ENCODE measurements at regions of chr16 and their contacts with region 1.

Region 1: DNA sequence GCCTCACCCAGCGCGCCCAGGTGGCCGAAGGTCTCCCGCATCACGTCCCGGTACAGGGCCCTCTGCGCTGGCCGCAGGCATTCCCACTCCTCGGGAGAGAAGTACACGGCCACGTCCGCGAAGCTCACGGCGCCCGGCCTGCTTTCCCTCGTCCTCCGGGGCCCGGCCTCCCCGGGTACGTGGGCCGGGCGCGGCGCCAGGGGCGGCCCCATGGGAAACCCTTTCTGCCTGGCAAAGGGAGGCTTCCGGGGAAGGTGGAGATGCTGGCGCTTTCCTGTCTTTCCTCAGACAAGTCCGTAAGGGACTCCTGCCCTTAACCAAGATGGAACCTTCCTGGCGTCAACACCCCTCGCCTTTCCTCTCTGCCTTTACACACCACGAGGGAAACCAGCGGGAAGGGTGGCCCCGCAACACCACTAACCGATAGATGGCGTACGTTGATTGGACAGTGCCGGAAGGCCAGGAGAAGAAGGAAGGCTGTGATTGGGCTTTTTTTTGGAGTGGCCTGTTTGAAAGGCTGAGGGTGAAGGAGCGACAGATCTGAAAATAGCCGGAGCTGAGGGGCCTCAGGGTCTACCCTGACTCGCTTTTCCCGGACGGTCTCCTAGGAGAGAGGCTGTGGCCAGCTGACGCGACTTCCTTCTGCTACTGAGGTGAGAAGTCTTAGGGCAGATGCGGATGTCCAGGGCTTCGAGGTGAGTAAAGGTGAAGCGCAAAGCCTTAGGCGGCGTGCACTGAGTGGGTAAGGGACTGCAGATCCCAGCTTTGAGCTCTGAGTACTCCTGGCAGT is at the start of gene ZNF785:
- DNase-seq: peak; percentile 92 to 99 (median 96)

Region 2: GRCh38 chr16:30535777-30536190 is 49.8 kb before region 1 on chr16:
- intact Hi-C with region 1: no loop called
- DNase-seq: peak in 7 of 10 donors; percentile 19 to 94 (median 49)

Region 3: DNA sequence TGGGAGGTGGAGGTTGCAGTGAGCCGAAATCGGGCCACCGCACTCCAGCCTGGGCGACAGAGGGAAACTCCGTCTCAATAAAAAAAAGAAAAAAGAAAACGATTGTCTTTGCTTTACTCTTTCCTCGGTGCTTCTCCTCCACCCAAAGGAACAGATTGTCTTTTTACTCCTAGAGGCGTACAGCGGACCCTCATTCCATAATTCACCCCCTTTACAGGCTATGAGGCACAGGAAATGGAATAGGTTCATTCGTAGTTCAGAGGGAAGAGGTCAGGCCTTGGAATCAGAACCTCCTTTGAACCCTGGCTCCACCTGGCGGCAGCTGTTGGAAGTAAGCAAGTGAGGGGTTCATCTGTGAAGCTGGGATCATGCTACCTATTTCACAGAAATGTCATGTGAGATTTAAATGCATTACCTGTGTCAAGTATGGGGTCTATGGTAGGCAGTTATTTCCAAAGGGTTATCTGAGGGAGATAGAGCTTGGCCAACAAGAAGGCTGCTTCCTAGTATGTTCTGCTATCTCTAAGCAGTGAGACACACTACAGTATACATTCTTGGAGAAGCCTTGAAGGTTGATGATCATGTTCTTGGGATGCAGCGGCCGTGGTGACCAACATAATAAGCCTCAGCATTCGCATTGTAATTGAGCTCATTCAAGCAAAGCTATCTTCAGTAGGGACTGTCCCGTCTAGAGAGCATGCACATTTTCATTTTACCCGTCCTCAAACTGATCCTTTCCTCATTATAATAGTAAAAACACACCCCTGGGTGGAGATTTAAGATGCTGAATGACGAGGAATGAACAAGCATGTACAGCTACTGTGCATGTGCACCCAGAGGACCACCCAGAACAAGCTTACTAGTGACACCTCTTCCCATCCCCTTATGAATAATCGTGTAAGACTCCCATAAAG is 43.3 kb after region 1 on chr16:
- intact Hi-C with region 1: loop called (anchors 5 kb)
- DNase-seq: peak; percentile 67 to 97 (median 91)

Measured in posterior cingulate gyrus (tissue), 11 donors.